Natural killer cell (primary cell): ENCODE measurements at regions of chr12 and their contacts with region 1.

Region 1: GRCh38 chr12:122793685-122794106 is 19.3 kb downstream of the CCDC62 start:
- DNase-seq: peak in 1 of 2 donors; percentile 77
- ATAC-seq: peak; percentile 77 to 81 (median 78)
- H3K4me3 ChIP-seq: no peak overlapping the region
- H3K4me3 Mint-ChIP-seq: no peak overlapping the region
- H3K27ac ChIP-seq: no peak overlapping the region
- H3K27ac Mint-ChIP-seq: no peak overlapping the region
- H3K4me1 ChIP-seq: no peaks in the 10 kb centered on the region
- H3K4me1 Mint-ChIP-seq: peaks cover 4% of the 10 kb centered on the region in 2 donors
- H3K27me3 ChIP-seq: no peaks in the 10 kb centered on the region
- H3K27me3 Mint-ChIP-seq: no peaks in the 10 kb centered on the region
- CTCF ChIP-seq: peak; percentile 81

Region 2: DNA sequence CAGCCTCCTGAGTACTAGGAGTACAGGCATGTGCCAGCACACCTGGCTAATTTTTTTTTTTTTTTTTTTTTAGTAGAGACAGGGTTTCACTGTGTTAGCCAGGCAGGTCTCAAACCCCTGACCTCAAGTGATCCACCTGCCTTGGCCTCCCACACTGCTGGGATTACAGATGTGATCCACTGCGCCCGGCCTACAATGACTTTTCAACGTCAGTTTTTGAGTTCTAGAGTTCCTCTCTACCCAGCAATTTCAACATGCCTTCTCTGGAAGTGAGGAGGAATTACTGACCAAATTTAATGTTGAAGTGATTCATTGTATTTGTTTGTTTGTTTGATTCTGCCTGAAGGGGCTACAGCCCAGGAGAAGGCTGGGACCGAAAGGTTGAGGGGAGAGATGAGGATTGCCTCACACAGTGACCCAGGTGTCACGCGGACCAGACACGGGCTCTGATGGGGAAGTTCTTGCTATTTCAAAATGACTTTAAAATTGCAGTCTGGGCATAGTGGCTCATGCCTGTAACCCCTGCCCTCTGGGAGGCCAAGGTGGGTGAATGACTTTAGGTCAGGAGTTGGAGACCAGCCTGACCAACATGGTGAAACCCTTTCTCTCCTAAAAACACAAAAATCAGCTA is 49.7 kb before region 1 on chr12:
- intact Hi-C with region 1: no loop called
- DNase-seq: no peak
- ATAC-seq: peak in 1 of 3 donors; percentile 39
- H3K4me3 ChIP-seq: no peak overlapping the region
- H3K4me3 Mint-ChIP-seq: no peak overlapping the region
- H3K27ac ChIP-seq: no peak overlapping the region
- H3K27ac Mint-ChIP-seq: peak overlapping the region in 1 of 2 donors; percentile 16
- H3K4me1 ChIP-seq: no peaks in the 10 kb centered on the region
- H3K4me1 Mint-ChIP-seq: no peaks in the 10 kb centered on the region
- H3K27me3 ChIP-seq: no peaks in the 10 kb centered on the region
- H3K27me3 Mint-ChIP-seq: no peaks in the 10 kb centered on the region
- CTCF ChIP-seq: no peak

Region 3: GRCh38 chr12:122836027-122836921 is 42.6 kb after region 1 on chr12:
- intact Hi-C with region 1: loop called (anchors 5 kb)
- DNase-seq: peak; percentile 32 to 76
- ATAC-seq: peak; percentile 70 to 80 (median 73)
- H3K4me3 ChIP-seq: peak overlapping the region; percentile 71
- H3K4me3 Mint-ChIP-seq: peak overlapping the region; percentile 97
- H3K27ac ChIP-seq: peak overlapping the region; percentile 53
- H3K27ac Mint-ChIP-seq: peak overlapping the region; percentile 89 to 93
- H3K4me1 ChIP-seq: peaks cover 19% of the 10 kb centered on the region
- H3K4me1 Mint-ChIP-seq: peaks cover 52 to 56% of the 10 kb centered on the region in 2 donors
- H3K27me3 ChIP-seq: no peaks in the 10 kb centered on the region
- H3K27me3 Mint-ChIP-seq: no peaks in the 10 kb centered on the region
- CTCF ChIP-seq: no peak

Region 4: DNA sequence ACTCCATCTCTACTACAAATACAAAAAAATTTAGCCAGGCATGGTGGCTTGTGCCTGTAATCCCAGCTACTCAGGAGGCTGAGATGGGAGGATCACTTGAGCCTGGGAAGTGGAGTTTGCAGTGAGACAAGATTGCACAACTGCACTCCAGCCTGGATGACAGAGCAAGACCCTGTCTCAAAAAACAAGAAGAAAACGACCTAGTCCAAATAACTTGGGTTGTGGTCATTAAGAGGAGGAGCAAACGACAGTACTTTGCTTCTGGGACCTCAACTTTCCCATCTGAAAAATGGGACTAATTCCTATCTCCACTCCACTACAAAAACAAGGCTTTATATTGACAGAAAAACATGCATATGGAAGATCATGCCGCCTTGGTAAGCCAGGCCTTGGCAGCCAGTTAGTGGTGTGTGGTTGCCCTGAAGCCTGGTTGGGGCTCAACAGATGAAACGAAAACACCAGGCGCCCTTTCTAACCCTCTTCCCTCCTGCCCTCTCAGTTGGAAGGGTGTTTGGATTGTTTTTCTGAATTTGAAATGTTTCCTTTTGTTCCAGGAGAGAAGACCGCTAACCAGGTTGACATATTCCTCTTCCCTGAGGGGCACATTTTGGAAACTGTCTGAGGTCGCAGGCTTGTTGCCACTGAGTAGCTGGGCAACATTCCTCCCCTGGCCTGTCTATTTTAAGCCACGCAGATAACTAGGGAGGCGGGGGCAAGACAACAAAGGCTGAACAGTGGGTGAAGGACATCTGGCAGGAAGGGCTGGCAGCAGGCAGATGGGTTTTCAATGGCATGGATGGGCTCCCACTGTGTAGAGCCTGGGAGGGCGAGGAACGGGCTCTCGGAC is 116.0 kb after region 1 on chr12:
- intact Hi-C with region 1: no loop called
- DNase-seq: no peak
- ATAC-seq: no peak
- H3K4me3 ChIP-seq: no peak overlapping the region
- H3K4me3 Mint-ChIP-seq: no peak overlapping the region
- H3K27ac ChIP-seq: no peak overlapping the region
- H3K27ac Mint-ChIP-seq: no peak overlapping the region
- H3K4me1 ChIP-seq: no peaks in the 10 kb centered on the region
- H3K4me1 Mint-ChIP-seq: no peaks in the 10 kb centered on the region
- H3K27me3 ChIP-seq: no peaks in the 10 kb centered on the region
- H3K27me3 Mint-ChIP-seq: no peaks in the 10 kb centered on the region
- CTCF ChIP-seq: no peak